CD4-positive, alpha-beta T cell (primary cell): ENCODE measurements at regions of chr16 and their contacts with region 1.

Region 1: DNA sequence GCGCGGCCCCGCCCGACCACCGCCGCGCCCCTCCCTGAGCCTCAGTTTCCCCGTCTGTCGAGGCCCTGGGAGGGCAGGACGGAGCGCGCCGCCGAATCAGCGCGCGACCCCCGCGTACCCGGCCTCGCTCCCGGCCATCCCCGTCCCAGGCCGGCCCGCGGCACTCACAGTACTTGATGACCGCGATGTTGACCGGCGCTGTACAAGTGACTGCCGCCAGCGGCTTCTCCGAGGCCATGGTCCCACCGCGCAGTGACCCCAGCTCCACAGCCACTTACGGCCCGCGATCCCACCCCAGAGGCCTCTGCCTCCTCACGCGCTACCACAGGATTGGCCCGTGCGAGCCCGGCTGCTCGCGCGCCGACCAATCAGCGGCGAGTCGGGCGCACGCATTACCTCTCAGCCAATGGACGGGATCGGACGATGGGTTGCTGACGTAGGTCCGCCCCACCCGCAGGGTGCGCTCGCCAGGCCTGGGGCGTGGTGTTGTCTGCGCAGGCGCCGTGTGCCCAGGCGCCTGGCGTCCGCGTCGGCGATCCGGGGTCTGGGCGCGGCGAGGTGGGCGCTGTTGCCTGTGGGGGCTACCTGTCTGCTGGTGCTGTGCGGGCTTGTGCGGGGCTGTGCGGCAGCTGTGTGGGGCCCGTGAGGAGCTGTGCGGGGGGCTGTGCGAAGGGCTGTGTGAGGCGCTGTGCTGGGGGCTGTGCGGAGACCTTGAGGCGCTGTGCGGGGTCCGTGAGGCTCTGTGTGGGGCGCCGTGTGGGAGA is at the start of gene MVD:
- DNase-seq: peak; percentile 87 to 98 (median 94)
- ATAC-seq: peak; percentile 97
- H3K4me3 ChIP-seq: peak within 1 kb of the TSS; percentile 84
- H3K4me3 Mint-ChIP-seq: peak within 1 kb of the TSS; percentile 94
- H3K27ac ChIP-seq: peak within 1 kb of the TSS; percentile 58 to 69
- H3K27ac Mint-ChIP-seq: peak within 1 kb of the TSS; percentile 91
- H3K4me1 ChIP-seq: peaks cover 19% of the 10 kb centered on the region
- H3K4me1 Mint-ChIP-seq: peaks cover 17% of the 10 kb centered on the region
- H3K27me3 ChIP-seq: no peaks in the 10 kb centered on the region
- H3K27me3 Mint-ChIP-seq: no peaks in the 10 kb centered on the region
- CTCF ChIP-seq: no peak
- total RNA-seq, gene MVD: 74.2 to 76.9 TPM

Region 2: GRCh38 chr16:87678618-87679017 is 984.4 kb before region 1 on chr16:
- CTCF ChIA-PET with region 1: no interaction called
- POLR2A ChIA-PET with region 1: no interaction called
- intact Hi-C with region 1: no loop called
- DNase-seq: no peak
- ATAC-seq: no peak
- H3K4me3 ChIP-seq: no peak overlapping the region
- H3K4me3 Mint-ChIP-seq: no peak overlapping the region
- H3K27ac ChIP-seq: no peak overlapping the region
- H3K27ac Mint-ChIP-seq: no peak overlapping the region
- H3K4me1 ChIP-seq: peaks cover 7% of the 10 kb centered on the region
- H3K4me1 Mint-ChIP-seq: no peaks in the 10 kb centered on the region
- H3K27me3 ChIP-seq: no peaks in the 10 kb centered on the region
- H3K27me3 Mint-ChIP-seq: no peaks in the 10 kb centered on the region
- CTCF ChIP-seq: no peak

Region 3: GRCh38 chr16:88569985-88570690 is 92.9 kb before region 1 on chr16 and contains the start of gene ZC3H18:
- CTCF ChIA-PET with region 1: no interaction called
- POLR2A ChIA-PET with region 1: interaction called, 9 read pairs
- intact Hi-C with region 1: loop called in 1 of 2 experiments (anchors 1 kb)
- DNase-seq: peak; percentile 93 to 100 (median 98)
- ATAC-seq: peak; percentile 93
- H3K4me3 ChIP-seq: peak within 1 kb of the TSS; percentile 65
- H3K4me3 Mint-ChIP-seq: peak within 1 kb of the TSS; percentile 88
- H3K27ac ChIP-seq: peak within 1 kb of the TSS; percentile 75 to 78
- H3K27ac Mint-ChIP-seq: peak within 1 kb of the TSS; percentile 87
- H3K4me1 ChIP-seq: peaks cover 31% of the 10 kb centered on the region
- H3K4me1 Mint-ChIP-seq: peaks cover 33% of the 10 kb centered on the region
- H3K27me3 ChIP-seq: no peaks in the 10 kb centered on the region
- H3K27me3 Mint-ChIP-seq: no peaks in the 10 kb centered on the region
- CTCF ChIP-seq: no peak
- total RNA-seq, gene ZC3H18: 92.6 to 93.7 TPM

Region 4: GRCh38 chr16:88650749-88651275 is 12.2 kb before region 1 on chr16 and contains the start of gene CYBA:
- CTCF ChIA-PET with region 1: no interaction called
- POLR2A ChIA-PET with region 1: interaction called, 4 read pairs
- intact Hi-C with region 1: loop called in 1 of 2 experiments (anchors 1 kb)
- DNase-seq: peak; percentile 64 to 91 (median 76)
- ATAC-seq: peak; percentile 76
- H3K4me3 ChIP-seq: peak within 1 kb of the TSS; percentile 96
- H3K4me3 Mint-ChIP-seq: peak within 1 kb of the TSS; percentile 93
- H3K27ac ChIP-seq: peak within 1 kb of the TSS; percentile 81 to 94
- H3K27ac Mint-ChIP-seq: peak within 1 kb of the TSS; percentile 95
- H3K4me1 ChIP-seq: peaks cover 56% of the 10 kb centered on the region
- H3K4me1 Mint-ChIP-seq: peaks cover 14% of the 10 kb centered on the region
- H3K27me3 ChIP-seq: no peaks in the 10 kb centered on the region
- H3K27me3 Mint-ChIP-seq: no peaks in the 10 kb centered on the region
- CTCF ChIP-seq: no peak
- total RNA-seq, gene CYBA: 292 to 294 TPM

Region 5: DNA sequence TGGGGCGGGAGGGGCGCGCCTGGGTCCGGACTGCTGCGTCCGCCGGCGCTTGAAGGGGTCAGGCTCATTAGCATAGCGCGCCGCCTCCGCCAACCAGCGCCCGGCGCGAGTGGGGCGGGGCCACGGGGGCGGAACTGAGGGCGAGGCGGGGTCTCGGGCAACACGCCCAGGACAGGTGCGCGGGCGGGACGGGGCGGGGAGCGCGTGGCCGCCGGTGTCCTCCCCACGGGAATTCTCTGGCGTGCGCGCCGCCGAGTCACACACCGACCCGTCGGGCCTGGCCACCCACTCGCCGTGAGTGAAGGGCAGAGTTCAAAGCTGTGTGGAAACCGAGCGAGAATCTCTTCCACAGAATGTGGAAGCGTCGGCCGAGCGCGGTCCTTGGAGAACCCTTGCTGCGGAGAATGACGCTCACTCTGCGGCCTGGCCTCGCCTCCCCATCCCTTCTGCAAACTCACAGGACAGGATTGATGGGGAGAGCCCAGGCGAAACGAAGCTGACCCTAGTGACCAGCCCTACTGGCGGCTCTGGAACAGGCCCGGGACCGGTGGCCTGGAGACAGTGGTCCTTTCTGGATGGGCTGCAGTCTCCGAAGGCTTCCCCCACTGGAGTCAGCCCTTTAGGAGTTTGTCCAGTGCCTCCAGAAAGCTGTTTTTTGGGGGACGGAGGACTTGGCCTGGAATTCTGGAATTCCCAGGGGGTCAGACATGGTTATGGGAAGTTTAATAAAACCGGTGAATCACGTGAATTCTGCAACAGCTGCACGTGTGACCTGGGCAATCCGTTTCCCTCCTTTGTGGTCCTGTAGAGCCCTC is 23.6 kb after region 1 on chr16 and contains the start of gene SNAI3:
- CTCF ChIA-PET with region 1: interaction called, 18 read pairs
- POLR2A ChIA-PET with region 1: interaction called, 5 read pairs
- intact Hi-C with region 1: loop called (anchors 1 to 2 kb)
- DNase-seq: peak; percentile 63 to 90 (median 80)
- ATAC-seq: peak; percentile 78
- H3K4me3 ChIP-seq: peak within 1 kb of the TSS; percentile 77
- H3K4me3 Mint-ChIP-seq: peak within 1 kb of the TSS; percentile 87
- H3K27ac ChIP-seq: peak within 1 kb of the TSS; percentile 29 to 56
- H3K27ac Mint-ChIP-seq: peak within 1 kb of the TSS; percentile 80
- H3K4me1 ChIP-seq: peaks cover 80% of the 10 kb centered on the region
- H3K4me1 Mint-ChIP-seq: peaks cover 58% of the 10 kb centered on the region
- H3K27me3 ChIP-seq: no peaks in the 10 kb centered on the region
- H3K27me3 Mint-ChIP-seq: no peaks in the 10 kb centered on the region
- CTCF ChIP-seq: no peak
- total RNA-seq, gene SNAI3: 3.0 to 3.5 TPM

Region 6: GRCh38 chr16:88706288-88706964 is 43.4 kb after region 1 on chr16 and contains the starts of genes CTU2 and RNF166:
- CTCF ChIA-PET with region 1: no interaction called
- POLR2A ChIA-PET with region 1: interaction called, 10 read pairs
- intact Hi-C with region 1: loop called in 1 of 2 experiments (anchors 1 kb)
- DNase-seq: peak; percentile 81 to 98 (median 90)
- ATAC-seq: peak; percentile 62
- H3K4me3 ChIP-seq: peak within 1 kb of the TSS; percentile 88
- H3K4me3 Mint-ChIP-seq: peak within 1 kb of the TSS; percentile 99
- H3K27ac ChIP-seq: peak within 1 kb of the TSS; percentile 93 to 96
- H3K27ac Mint-ChIP-seq: peak within 1 kb of the TSS; percentile 100
- H3K4me1 ChIP-seq: peaks cover 56% of the 10 kb centered on the region
- H3K4me1 Mint-ChIP-seq: peaks cover 53% of the 10 kb centered on the region
- H3K27me3 ChIP-seq: no peaks in the 10 kb centered on the region
- H3K27me3 Mint-ChIP-seq: no peaks in the 10 kb centered on the region
- CTCF ChIP-seq: no peak
- total RNA-seq, gene CTU2: 39.3 to 44.0 TPM
- total RNA-seq, gene RNF166: 334 to 355 TPM